ENCODE measurements at regions of chr12 and their contacts with region 1.

Region 1: GRCh38 chr12:9634177-9634803 is 26.6 kb upstream of the KLRB1 start:
- DNase-seq: peak; percentile 63
- CTCF ChIP-seq: peak; percentile 71

Region 2: GRCh38 chr12:9331218-9331626 is 303.1 kb before region 1 on chr12:
- CTCF ChIA-PET with region 1: interaction called, 11 read pairs
- POLR2A ChIA-PET with region 1: no interaction called
- DNase-seq: peak; percentile 67
- CTCF ChIP-seq: peak; percentile 96

Region 3: DNA sequence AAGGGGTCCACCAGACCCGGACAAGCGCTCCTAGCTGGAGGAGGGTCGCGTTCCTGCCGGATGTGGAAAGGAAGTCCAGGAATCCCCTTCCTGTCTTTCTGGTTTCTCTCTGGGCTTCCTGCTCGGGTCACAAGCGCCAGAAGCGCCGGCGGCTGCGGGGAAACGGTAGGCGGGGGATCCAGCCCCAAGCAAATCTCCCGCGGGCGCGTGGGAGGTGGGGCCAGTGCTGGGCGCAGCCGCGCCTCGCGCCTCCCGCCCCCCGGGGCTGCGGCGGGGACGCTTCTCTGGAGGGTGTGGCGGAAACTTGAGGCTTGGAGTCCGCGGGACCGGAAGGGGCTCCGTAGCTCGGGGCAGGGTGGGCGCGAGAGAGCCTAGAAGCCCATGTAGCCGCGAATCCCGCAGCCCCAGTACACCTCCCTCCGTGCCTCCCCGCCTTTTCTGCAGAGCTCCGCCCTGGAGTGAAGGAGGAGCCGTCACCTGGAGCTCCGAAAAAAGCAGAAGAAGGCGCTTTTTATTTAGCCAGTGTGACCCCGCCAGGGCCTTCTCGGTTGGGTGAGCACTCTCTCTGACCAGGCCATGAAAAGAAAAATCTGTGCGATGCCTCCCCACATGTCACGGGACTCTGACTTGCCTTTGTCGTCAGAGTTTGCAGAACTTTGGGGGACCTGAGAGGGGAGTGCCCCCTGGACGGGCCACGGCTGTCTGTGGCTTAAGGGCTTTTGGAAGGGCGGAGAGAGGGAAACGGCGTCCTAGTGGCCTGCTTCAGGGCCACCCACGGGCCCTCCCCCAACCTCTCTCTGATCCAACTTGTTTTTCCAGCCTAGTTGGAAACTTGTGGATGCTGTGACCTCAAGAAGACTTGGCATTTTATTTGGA is 13.8 kb after region 1 on chr12:
- CTCF ChIA-PET with region 1: interaction called, 18 read pairs
- POLR2A ChIA-PET with region 1: no interaction called
- DNase-seq: peak; percentile 86
- CTCF ChIP-seq: no peak

Region 4: DNA sequence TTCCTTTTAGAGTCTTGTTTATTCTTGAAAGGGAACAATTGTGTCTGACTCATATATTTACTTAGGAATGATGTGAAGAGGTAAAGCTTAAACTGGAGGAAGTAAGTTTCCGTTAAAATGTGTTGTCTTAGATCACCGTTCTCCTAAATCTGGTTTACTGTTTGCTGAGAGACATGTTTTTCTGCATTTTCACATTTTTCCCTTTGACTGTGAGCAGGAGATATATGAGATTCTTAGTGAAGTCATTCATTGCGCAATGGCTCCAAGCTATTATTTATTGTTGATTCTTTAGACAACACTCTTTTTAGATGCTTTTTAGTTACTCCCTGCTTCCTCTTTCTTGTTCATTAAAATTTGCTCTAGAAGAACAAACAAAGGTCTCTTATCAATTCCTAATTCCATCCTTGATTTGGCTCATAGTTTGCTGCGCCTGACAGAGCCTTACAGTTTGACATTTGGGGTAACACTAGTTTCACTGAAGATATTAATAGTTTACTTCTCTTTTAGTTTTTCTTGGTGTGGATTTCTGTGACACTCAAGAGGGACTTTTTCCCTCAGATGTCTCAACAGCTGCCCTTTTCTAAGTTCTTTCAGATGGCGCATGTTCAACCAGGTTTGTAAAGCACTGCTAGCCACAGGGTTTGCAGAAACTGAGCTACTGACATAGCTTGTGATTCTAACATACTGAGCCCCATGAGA is 87.3 kb after region 1 on chr12:
- CTCF ChIA-PET with region 1: interaction called, 23 read pairs
- POLR2A ChIA-PET with region 1: no interaction called
- DNase-seq: peak; percentile 47
- CTCF ChIP-seq: no peak